WTC11 (cell line): ENCODE measurements at regions of chr4 and their contacts with region 1.

Region 1: DNA sequence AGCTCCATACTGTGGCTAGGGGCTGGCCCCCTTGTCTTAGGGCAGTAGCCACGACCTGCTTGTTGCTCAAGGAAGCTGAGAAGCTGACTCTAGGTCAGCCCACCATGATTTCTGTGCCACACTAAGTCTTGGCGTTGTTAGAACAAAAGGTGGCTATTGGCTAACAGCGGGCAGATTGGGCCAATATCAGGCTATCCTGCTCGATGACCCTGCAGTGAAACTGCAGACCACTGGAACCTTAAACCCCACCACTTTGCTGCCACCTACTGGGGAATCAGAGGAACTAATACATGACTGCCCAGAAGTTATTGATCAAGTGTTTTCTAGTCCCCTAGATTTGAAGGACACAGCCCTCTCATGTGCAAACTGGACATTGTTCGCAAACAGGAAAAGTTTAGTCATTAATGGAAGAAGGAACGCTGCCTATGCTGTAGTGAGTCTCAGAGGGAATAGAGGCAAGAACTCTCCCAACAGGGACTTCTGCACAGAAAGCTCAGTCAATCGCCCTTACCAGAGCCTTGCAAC is 17.0 kb upstream of the PAPSS1 start:
- DNase-seq: peak; percentile 62
- ATAC-seq: peak; percentile 86
- H3K4me3 Mint-ChIP-seq: no peak overlapping the region
- H3K27ac Mint-ChIP-seq: no peak overlapping the region
- H3K4me1 Mint-ChIP-seq: peaks cover 31% of the 10 kb centered on the region
- H3K27me3 Mint-ChIP-seq: peaks cover 45% of the 10 kb centered on the region
- CTCF ChIP-seq: peak; percentile 72

Region 2: DNA sequence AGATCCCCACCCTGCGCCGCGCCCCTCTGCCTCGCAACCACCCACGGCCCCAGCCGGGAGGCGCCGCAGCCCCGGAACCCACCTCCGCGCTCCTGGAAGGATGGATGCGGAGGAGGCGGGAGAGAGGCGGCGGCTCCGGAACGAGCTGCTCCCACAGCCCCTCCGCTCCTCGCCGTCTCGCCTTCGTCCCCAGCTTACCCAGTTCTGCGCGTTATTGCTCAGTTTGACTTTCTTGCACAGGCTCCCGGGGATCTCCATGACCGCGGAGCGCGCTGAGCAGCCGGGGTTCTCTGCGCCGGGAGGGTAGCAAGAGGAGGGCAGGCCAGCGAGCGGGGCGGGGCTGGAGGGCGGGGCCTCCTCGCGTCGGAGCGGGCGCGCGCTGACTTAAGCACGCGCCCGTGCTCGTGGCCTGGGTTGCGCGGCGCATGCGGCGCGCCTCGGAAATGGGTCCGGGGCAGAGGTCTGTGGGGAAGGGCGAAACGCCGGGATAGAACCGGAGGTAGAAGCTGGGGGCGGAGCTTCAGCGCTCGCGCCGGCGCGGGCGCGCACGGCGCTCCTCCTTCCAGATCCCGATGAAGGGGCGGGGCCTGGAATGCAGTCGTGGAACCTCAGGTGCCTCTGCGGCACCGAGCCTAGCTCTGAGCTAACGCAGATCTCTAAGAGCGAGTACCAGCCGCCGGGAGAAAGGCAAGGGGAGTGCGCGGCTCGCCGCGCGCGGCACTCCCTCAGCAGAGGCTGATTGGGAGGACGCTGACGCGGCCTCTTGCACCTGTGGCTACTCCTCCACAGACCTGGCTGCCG is 16.9 kb before region 1 on chr4 and contains the start of gene PAPSS1:
- CTCF ChIA-PET with region 1: interaction called, 19 read pairs
- POLR2A ChIA-PET with region 1: interaction called, 3 read pairs
- DNase-seq: peak; percentile 98
- ATAC-seq: peak; percentile 92
- H3K4me3 Mint-ChIP-seq: peak within 1 kb of the TSS; percentile 95
- H3K27ac Mint-ChIP-seq: peak within 1 kb of the TSS; percentile 97
- H3K4me1 Mint-ChIP-seq: peaks cover 45% of the 10 kb centered on the region
- H3K27me3 Mint-ChIP-seq: peaks cover 3% of the 10 kb centered on the region; the same call in 1 of the 2 replicates
- CTCF ChIP-seq: no peak
- total RNA-seq, gene PAPSS1: 62.9 to 78.1 TPM (median 74.4 TPM) in 3 replicates

Region 3: GRCh38 chr4:107780665-107781064 is 43.7 kb after region 1 on chr4:
- CTCF ChIA-PET with region 1: no interaction called
- POLR2A ChIA-PET with region 1: no interaction called
- DNase-seq: peak; percentile 26
- ATAC-seq: no peak
- H3K4me3 Mint-ChIP-seq: no peak overlapping the region
- H3K27ac Mint-ChIP-seq: no peak overlapping the region
- H3K4me1 Mint-ChIP-seq: no peaks in the 10 kb centered on the region
- H3K27me3 Mint-ChIP-seq: peaks cover 3% of the 10 kb centered on the region; the same call in 1 of the 2 replicates
- CTCF ChIP-seq: no peak

Region 4: GRCh38 chr4:107843391-107843790 is 106.4 kb after region 1 on chr4:
- CTCF ChIA-PET with region 1: no interaction called
- POLR2A ChIA-PET with region 1: no interaction called
- DNase-seq: no peak
- ATAC-seq: 0 out of 2 replicates have a peak, but pooled peaks have one; percentile 22
- H3K4me3 Mint-ChIP-seq: no peak overlapping the region
- H3K27ac Mint-ChIP-seq: no peak overlapping the region
- H3K4me1 Mint-ChIP-seq: no peaks in the 10 kb centered on the region
- H3K27me3 Mint-ChIP-seq: no peaks in the 10 kb centered on the region
- CTCF ChIP-seq: no peak

Region 5: DNA sequence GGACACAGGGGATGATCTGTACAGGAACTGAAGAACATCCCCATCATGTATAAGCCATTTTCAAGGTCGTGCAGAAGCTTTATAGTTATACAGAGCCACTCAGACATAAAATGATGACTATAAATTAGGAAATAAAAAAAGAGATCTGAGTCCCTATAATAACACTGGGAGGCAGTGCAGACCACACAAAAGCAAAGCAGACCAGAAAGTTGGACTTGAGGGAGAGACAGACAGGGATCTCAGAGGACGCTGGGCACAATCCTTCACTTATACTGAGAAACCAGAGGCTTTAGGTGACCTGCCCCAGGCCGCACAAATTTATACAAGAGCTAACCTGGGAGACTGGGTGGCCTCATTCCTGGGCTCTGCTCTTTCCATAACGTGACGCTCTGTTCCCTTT is 323.2 kb after region 1 on chr4:
- CTCF ChIA-PET with region 1: no interaction called
- POLR2A ChIA-PET with region 1: no interaction called
- DNase-seq: no peak
- ATAC-seq: peak; percentile 58
- H3K4me3 Mint-ChIP-seq: no peak overlapping the region
- H3K27ac Mint-ChIP-seq: no peak overlapping the region
- H3K4me1 Mint-ChIP-seq: peaks cover 6% of the 10 kb centered on the region
- H3K27me3 Mint-ChIP-seq: no peaks in the 10 kb centered on the region
- CTCF ChIP-seq: no peak